K562 (cell line): ENCODE measurements at regions of chr10 and their contacts with region 1.

Region 1: GRCh38 chr10:14536241-14537213 is 205.8 kb upstream of the FRMD4A start:
- DNase-seq: peak; percentile 45 to 71 (median 55)
- ATAC-seq: peak; percentile 96
- H3K4me3 ChIP-seq: no peak overlapping the region
- H3K27ac ChIP-seq: no peak overlapping the region
- H3K4me1 ChIP-seq: no peaks in the 10 kb centered on the region
- H3K27me3 ChIP-seq: peaks cover 30 to 54% of the 10 kb centered on the region in 2 experiments
- CTCF ChIP-seq: peak; percentile 61 to 79 (median 74)
- EP300 ChIP-seq: no peak
- POLR2A ChIP-seq: no peak
- RAD21 ChIP-seq: peak; percentile 66 to 76

Region 2: DNA sequence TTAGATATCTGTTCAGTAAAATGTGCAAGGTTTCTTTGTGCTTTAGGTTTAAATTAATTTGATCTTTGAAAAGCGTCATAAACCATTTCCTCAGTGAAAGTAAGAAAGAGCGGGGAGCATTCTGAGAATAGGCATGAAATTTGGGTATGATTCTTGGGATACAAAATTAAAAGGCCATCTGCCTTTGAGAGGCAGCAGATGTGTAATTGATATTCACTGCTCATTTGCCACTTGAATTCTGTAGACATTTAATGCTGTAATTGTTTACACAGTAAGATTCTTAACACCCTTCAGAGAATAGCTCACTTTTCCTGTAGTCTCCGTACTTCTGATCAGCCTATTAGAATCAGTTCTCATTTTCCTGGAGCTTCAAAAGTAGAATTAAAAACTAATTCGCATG is 224.5 kb before region 1 on chr10:
- CTCF ChIA-PET with region 1: no interaction called
- POLR2A ChIA-PET with region 1: no interaction called
- in situ Hi-C with region 1: no loop called
- intact Hi-C with region 1: no loop called
- DNase-seq: no peak
- ATAC-seq: no peak
- H3K4me3 ChIP-seq: no peak overlapping the region
- H3K27ac ChIP-seq: no peak overlapping the region
- H3K4me1 ChIP-seq: no peaks in the 10 kb centered on the region
- H3K27me3 ChIP-seq: peaks cover 0 to 9% of the 10 kb centered on the region in 2 experiments; a peak in 1 of 5 replicates
- CTCF ChIP-seq: no peak
- EP300 ChIP-seq: no peak
- POLR2A ChIP-seq: no peak
- RAD21 ChIP-seq: no peak

Region 3: DNA sequence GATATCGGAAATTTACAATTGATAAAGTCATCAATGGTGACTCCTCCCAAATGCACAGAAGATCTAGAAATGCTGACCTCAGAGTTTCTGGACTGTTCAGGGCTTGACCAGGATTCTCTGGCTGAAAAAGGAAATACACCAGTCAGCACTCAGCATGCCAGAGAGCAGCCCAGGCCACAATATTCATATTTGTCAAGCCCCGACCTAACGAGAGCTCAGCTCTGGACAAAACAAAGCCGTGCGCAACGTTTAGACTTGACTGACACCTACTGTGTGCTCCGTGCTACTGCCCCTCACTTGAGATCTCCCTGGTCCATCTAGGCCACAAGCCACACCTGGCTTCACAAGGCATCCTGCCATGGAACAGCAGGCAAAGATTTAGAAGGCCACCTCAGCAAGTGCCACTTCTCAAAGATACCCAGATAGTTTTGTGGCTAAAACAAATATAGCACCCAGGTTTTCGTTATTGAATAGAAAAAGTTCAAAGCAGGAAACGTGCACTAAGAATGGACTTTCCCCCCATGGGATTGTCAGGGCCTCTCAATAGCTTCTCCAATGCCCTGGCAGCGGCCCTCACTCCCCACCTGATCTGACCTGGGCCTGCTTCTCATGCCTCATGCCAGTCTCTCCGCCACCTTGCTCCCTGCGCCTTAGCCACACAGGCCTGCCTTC is 19.9 kb after region 1 on chr10:
- CTCF ChIA-PET with region 1: interaction called, 10 read pairs
- POLR2A ChIA-PET with region 1: no interaction called
- in situ Hi-C with region 1: no loop called
- intact Hi-C with region 1: no loop called
- DNase-seq: peak; percentile 17 to 47 (median 32)
- ATAC-seq: peak; percentile 92
- H3K4me3 ChIP-seq: no peak overlapping the region
- H3K27ac ChIP-seq: no peak overlapping the region
- H3K4me1 ChIP-seq: no peaks in the 10 kb centered on the region; a peak in 1 of 5 replicates
- H3K27me3 ChIP-seq: peaks cover 5 to 43% of the 10 kb centered on the region in 2 experiments; a peak in 3 of 5 replicates
- CTCF ChIP-seq: peak; percentile 54 to 60 (median 57)
- EP300 ChIP-seq: no peak
- POLR2A ChIP-seq: no peak
- RAD21 ChIP-seq: peak in 1 of 2 experiments; percentile 55; a peak in 2 of 4 replicates

Region 4: DNA sequence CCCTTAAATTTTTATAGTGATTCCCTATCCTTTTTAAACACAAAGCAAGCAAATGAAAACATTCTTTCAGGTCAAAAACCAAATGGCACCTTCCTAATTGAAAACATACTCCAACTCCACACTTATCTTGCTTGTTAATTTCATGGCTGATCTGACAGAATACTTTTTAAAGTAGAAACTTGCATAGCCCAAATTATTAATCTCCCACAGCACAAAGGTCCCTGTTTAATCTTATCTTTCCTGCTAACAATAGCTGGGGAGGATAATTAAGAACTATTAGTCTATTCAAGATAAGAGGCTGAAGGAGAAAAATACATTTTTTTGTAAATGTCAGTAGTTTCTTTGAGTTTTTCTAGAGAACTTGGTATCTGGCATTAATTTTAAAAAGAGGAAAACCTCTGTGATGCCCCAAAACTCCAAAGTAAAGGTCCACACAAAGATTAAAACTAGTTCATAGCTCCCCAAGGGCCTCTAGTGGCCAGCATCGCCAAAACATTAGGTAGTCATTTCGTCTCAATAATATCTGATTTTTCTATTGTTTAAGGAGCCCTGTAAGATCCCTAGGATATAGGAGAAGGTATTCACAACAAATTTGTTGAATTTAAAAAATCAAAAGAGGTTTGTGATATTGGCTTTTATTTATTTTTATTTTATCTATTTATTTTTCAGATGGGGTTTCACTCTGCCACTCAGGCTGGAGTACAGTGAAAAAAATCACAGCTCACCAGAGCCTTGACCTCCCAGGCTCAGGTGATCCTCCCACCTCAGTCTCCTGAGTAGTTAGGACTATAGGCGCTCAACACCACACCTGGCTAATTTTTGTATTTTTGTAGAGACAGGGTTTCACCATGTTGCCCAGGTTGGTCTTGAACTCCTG is 286.6 kb after region 1 on chr10:
- CTCF ChIA-PET with region 1: interaction called, 3 read pairs
- POLR2A ChIA-PET with region 1: no interaction called
- in situ Hi-C with region 1: no loop called
- intact Hi-C with region 1: loop called (anchors 2 kb)
- DNase-seq: peak in 2 of 4 experiments; percentile 24 to 25
- ATAC-seq: peak; percentile 60; the same call in 1 of the 3 replicates
- H3K4me3 ChIP-seq: no peak overlapping the region
- H3K27ac ChIP-seq: no peak overlapping the region
- H3K4me1 ChIP-seq: no peaks in the 10 kb centered on the region; a peak in 1 of 5 replicates
- H3K27me3 ChIP-seq: peaks cover 4 to 7% of the 10 kb centered on the region in 2 experiments; a peak in 3 of 5 replicates
- CTCF ChIP-seq: peak; percentile 32 to 60 (median 48); a peak in 4 of 6 replicates
- EP300 ChIP-seq: no peak
- POLR2A ChIP-seq: no peak
- RAD21 ChIP-seq: peak; percentile 28 to 60

Region 5: GRCh38 chr10:14971867-14972448 is 435.4 kb after region 1 on chr10:
- CTCF ChIA-PET with region 1: interaction called, 4 read pairs
- POLR2A ChIA-PET with region 1: no interaction called
- in situ Hi-C with region 1: no loop called
- intact Hi-C with region 1: loop called (anchors 5 kb)
- DNase-seq: peak in 1 of 4 experiments; percentile 53
- ATAC-seq: peak; percentile 88
- H3K4me3 ChIP-seq: no peak overlapping the region
- H3K27ac ChIP-seq: no peak overlapping the region
- H3K4me1 ChIP-seq: no peaks in the 10 kb centered on the region
- H3K27me3 ChIP-seq: peaks cover 0 to 2% of the 10 kb centered on the region in 2 experiments; a peak in 2 of 5 replicates
- CTCF ChIP-seq: peak; percentile 65 to 75 (median 67)
- EP300 ChIP-seq: no peak
- POLR2A ChIP-seq: no peak
- RAD21 ChIP-seq: peak; percentile 45 to 63

Region 6: DNA sequence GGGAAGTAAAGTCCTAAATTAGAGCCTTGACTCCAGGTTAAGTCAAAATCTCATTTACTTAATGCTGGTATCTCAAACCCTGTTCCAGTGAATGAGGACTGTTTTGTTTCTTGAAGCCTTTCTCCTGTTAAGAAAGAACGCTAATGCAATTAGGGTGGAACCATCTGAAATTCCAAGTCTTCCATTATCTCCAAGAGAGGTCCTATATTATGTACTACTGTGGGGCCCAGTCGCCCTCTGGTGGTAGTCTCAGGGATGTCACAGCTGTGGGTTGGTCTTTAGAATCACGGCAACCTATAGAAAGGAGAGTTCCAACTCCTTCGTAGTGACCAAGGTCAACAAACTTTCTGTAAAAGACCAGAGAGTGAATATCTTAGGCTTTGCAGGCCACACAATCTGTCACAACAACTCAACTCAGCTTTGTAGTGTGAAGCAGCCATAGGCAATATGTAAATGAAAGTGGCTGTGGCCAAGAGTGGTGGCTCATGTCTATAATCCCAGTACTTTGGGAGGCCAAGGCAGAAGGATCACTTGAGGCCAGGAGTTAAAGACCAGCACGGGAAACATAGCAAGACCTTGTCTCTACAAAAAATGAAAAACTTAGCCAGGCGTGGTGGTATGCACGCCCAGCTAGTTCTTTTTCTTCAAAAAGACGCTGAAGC is 570.0 kb after region 1 on chr10:
- CTCF ChIA-PET with region 1: no interaction called
- POLR2A ChIA-PET with region 1: no interaction called
- in situ Hi-C with region 1: no loop called
- intact Hi-C with region 1: loop called (anchors 10 kb)
- DNase-seq: peak; percentile 64 to 80 (median 68)
- ATAC-seq: peak; percentile 99
- H3K4me3 ChIP-seq: no peak overlapping the region
- H3K27ac ChIP-seq: no peak overlapping the region
- H3K4me1 ChIP-seq: no peaks in the 10 kb centered on the region
- H3K27me3 ChIP-seq: no peaks in the 10 kb centered on the region
- CTCF ChIP-seq: peak; percentile 84 to 93 (median 91)
- EP300 ChIP-seq: no peak
- POLR2A ChIP-seq: no peak
- RAD21 ChIP-seq: peak; percentile 91 to 94